ENCODE measurements at regions of chr1 and their contacts with region 1.

Region 1: DNA sequence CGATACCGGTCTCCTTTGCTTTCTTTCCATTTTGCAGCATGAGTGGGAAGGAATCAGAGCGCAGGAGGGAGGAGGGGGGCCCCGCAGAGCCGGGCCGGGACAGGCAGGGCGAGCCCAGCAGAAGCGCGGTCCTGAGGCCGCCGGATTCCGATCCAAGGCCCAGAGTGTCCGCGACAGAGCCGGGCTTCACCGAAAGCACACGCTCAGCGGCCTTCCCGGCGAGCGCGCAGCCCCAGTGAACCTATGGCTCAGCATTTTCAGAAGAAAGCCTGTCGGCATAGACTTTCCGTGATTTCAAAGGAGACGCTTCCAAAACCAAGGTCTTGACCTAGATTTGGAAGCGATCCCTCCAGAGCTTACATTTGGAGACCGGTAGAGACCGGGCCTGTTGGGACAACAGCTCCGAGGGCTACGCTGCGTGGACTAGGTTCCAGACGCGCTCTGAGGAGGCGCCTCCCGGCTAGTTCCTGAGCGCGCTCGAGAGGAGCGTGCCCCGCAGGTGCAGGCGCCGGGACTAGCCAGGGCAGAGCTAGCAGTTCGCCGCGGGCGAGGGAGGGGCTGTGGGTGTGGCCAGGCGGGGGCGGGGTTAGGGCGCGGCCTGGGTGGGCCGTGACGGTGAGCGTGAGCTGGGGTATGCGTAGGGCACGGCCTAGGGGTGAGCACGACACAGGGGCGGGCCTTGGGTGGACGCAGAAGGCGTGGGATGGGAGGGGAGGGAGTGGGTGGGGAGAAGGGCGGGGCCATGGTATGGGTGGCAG is 27.8 kb upstream of the PRSS38 start:
- DNase-seq: peak; percentile 86
- H3K4me3 Mint-ChIP-seq: peak overlapping the region; percentile 82
- H3K27ac Mint-ChIP-seq: peak overlapping the region; percentile 34
- H3K4me1 Mint-ChIP-seq: peaks cover 23% of the 10 kb centered on the region
- H3K27me3 Mint-ChIP-seq: peaks cover 9% of the 10 kb centered on the region

Region 2: DNA sequence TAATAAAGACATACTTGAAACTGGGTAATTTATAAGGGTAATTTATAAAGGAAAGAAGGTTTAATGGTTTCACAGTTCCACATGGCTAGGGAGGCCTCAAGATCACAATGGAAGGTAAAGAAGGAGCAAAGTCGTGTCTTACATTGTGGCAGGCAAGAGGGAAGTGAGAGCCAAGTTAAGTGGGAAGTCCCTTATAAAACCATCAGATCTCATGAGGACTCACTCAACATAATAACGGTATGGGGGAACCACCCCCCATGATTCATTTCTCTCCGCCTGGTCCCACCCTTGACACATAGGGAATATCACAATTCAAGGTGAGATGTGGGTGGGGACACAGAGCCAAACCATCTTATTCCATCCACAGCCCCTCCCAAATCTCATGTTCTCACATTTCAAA is 301.1 kb before region 1 on chr1:
- intact Hi-C with region 1: loop called (anchors 2 kb)
- DNase-seq: no peak
- H3K4me3 Mint-ChIP-seq: no peak overlapping the region
- H3K27ac Mint-ChIP-seq: no peak overlapping the region
- H3K4me1 Mint-ChIP-seq: no peaks in the 10 kb centered on the region
- H3K27me3 Mint-ChIP-seq: peaks cover 12% of the 10 kb centered on the region

Region 3: GRCh38 chr1:227604446-227604845 is 183.2 kb before region 1 on chr1:
- intact Hi-C with region 1: no loop called
- DNase-seq: no peak
- H3K4me3 Mint-ChIP-seq: no peak overlapping the region
- H3K27ac Mint-ChIP-seq: no peak overlapping the region
- H3K4me1 Mint-ChIP-seq: no peaks in the 10 kb centered on the region
- H3K27me3 Mint-ChIP-seq: no peaks in the 10 kb centered on the region

Region 4: GRCh38 chr1:227728059-227728891 is 59.4 kb before region 1 on chr1:
- intact Hi-C with region 1: loop called (anchors 1 kb)
- DNase-seq: peak; percentile 37
- H3K4me3 Mint-ChIP-seq: peak overlapping the region; percentile 85
- H3K27ac Mint-ChIP-seq: peak overlapping the region; percentile 72
- H3K4me1 Mint-ChIP-seq: peaks cover 5% of the 10 kb centered on the region
- H3K27me3 Mint-ChIP-seq: peaks cover 7% of the 10 kb centered on the region

Region 5: GRCh38 chr1:227808566-227808965 is 20.9 kb after region 1 on chr1:
- intact Hi-C with region 1: no loop called
- DNase-seq: no peak
- H3K4me3 Mint-ChIP-seq: no peak overlapping the region
- H3K27ac Mint-ChIP-seq: no peak overlapping the region
- H3K4me1 Mint-ChIP-seq: peaks cover 6% of the 10 kb centered on the region
- H3K27me3 Mint-ChIP-seq: peaks cover 12% of the 10 kb centered on the region

Region 6: DNA sequence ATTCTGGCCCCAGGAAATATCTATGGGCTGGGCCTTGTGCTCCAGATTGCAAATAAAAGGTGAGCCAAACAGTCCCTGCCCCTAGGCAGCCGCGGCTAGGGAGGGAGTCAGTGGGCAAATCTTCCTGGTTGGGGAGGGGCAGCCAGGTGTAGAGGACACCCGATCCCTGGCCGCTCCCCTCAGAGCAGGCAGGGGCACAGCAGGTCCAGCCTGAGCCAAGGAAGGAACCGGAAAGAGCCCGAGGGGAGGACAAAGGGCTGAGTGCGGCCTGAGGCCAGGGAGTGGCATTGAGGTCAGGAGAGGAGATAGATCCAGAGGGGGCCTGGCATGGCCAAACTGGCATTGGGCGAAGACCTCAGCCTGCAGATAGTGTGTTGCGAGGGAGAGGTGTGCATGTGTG is 258.2 kb after region 1 on chr1:
- intact Hi-C with region 1: no loop called
- DNase-seq: no peak
- H3K4me3 Mint-ChIP-seq: no peak overlapping the region
- H3K27ac Mint-ChIP-seq: no peak overlapping the region
- H3K4me1 Mint-ChIP-seq: no peaks in the 10 kb centered on the region
- H3K27me3 Mint-ChIP-seq: peaks cover 1% of the 10 kb centered on the region

Region 7: GRCh38 chr1:228082135-228082891 is 294.6 kb after region 1 on chr1 and contains the start of gene ARF1:
- intact Hi-C with region 1: loop called (anchors 1 kb)
- DNase-seq: peak; percentile 91
- H3K4me3 Mint-ChIP-seq: peak within 1 kb of the TSS; percentile 97
- H3K27ac Mint-ChIP-seq: peak within 1 kb of the TSS; percentile 91
- H3K4me1 Mint-ChIP-seq: peaks cover 37% of the 10 kb centered on the region
- H3K27me3 Mint-ChIP-seq: no peaks in the 10 kb centered on the region
- total RNA-seq, gene ARF1: 404 TPM in 2 replicates

Region 8: GRCh38 chr1:228139944-228140656 is 352.4 kb after region 1 on chr1 and contains the start of gene GUK1:
- intact Hi-C with region 1: loop called (anchors 1 kb)
- DNase-seq: peak; percentile 100
- H3K4me3 Mint-ChIP-seq: peak within 1 kb of the TSS; percentile 100
- H3K27ac Mint-ChIP-seq: peak within 1 kb of the TSS; percentile 97
- H3K4me1 Mint-ChIP-seq: peaks cover 22% of the 10 kb centered on the region
- H3K27me3 Mint-ChIP-seq: peaks cover 21% of the 10 kb centered on the region
- total RNA-seq, gene GUK1: 201 and 202 TPM in 2 replicates

Region 9: GRCh38 chr1:228464487-228464983 is 676.8 kb after region 1 on chr1:
- intact Hi-C with region 1: loop called (anchors 5 kb)
- DNase-seq: peak; percentile 88
- H3K4me3 Mint-ChIP-seq: peak overlapping the region; percentile 85
- H3K27ac Mint-ChIP-seq: peak overlapping the region; percentile 88
- H3K4me1 Mint-ChIP-seq: peaks cover 61% of the 10 kb centered on the region
- H3K27me3 Mint-ChIP-seq: peaks cover 11% of the 10 kb centered on the region

Measured in activated T-helper 1 cell treated with anti-CD3 and anti-CD28 coated beads, Interleukin-12 subunit alpha, Interleukin-12 subunit beta, Interleukin-2, Interleukin-4 antibody, amounts not matched to agents 30 ng/mL and 10 ng/mL and 1 ng/mL, durations not matched to agents 14 hours and 24 hours and 36 hours (primary cell).